Right ventricle myocardium inferior (tissue), 1 donor: ENCODE measurements at regions of chr16 and their contacts with region 1.

Region 1: GRCh38 chr16:8797364-8798173 is at the starts of genes PMM2 and TMEM186:
- DNase-seq: peak; percentile 99
- ATAC-seq: peak; percentile 100
- total RNA-seq, gene PMM2: 15.9 TPM
- total RNA-seq, gene TMEM186: 13.8 TPM

Region 2: DNA sequence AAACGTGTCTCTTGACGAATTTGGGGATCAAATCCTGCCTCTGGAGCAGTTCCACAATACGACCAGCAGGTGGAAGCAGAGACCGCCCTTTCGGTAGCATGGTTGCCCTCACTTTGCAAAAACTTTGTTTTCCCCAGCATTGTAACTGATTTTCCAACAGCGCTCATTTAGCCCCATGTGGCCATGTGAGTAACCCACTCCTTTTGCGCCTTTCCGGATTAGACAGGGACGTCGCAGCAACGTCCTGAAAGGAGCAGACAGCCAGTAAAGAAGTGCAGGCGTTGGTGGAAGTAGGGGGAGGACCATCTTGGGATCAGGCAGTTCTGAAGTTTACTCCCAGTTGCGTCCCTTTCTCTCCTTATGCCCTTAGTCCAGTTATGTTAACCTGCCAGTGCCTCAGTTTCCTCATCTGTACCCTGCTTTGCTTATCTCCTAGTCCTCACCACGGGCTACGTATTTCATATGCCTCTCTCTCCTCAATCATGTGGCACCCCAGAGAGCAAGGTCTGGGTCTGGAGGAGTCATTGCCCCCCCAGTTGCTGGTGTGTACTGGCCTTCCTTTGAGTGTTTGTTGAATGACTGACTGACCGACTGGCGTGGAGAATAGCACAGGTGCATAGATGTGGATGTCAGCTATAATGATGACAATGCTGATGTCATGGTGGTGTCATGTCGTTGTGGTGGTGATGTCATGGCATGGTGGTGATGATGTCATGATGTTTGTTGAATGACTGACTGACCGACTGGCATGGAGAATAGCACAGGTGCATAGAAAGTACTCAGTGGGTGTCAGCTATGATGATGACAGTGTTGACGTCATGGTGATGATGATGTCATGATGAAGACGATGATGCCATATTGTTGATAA is 229.6 kb before region 1 on chr16:
- intact Hi-C with region 1: loop called (anchors 5 kb)
- DNase-seq: no peak
- ATAC-seq: peak; percentile 72

Region 3: GRCh38 chr16:8868416-8869211 is 71.0 kb after region 1 on chr16 and contains the start of gene CARHSP1:
- intact Hi-C with region 1: loop called (anchors 5 kb)
- DNase-seq: peak; percentile 93
- ATAC-seq: peak; percentile 92
- total RNA-seq, gene CARHSP1: 32.7 TPM